ENCODE measurements at regions of chr12 and their contacts with region 1.

Region 1: GRCh38 chr12:124567661-124568373 is 405 bp upstream of the NCOR2 start:
- DNase-seq: peak; percentile 74
- ATAC-seq: peak; percentile 66
- H3K4me3 Mint-ChIP-seq: peak overlapping the region; percentile 82
- H3K27ac Mint-ChIP-seq: peak overlapping the region; percentile 84
- H3K4me1 Mint-ChIP-seq: peaks cover 44% of the 10 kb centered on the region
- H3K27me3 Mint-ChIP-seq: no peaks in the 10 kb centered on the region
- CTCF ChIP-seq: no peak

Region 2: GRCh38 chr12:123388177-123388947 is 1179.5 kb before region 1 on chr12:
- CTCF ChIA-PET with region 1: no interaction called
- POLR2A ChIA-PET with region 1: no interaction called
- intact Hi-C with region 1: loop called (anchors 10 kb)
- DNase-seq: peak; percentile 79
- ATAC-seq: peak; percentile 59
- H3K4me3 Mint-ChIP-seq: peak overlapping the region; percentile 88
- H3K27ac Mint-ChIP-seq: peak overlapping the region; percentile 87
- H3K4me1 Mint-ChIP-seq: peaks cover 36% of the 10 kb centered on the region
- H3K27me3 Mint-ChIP-seq: no peaks in the 10 kb centered on the region
- CTCF ChIP-seq: no peak

Region 3: DNA sequence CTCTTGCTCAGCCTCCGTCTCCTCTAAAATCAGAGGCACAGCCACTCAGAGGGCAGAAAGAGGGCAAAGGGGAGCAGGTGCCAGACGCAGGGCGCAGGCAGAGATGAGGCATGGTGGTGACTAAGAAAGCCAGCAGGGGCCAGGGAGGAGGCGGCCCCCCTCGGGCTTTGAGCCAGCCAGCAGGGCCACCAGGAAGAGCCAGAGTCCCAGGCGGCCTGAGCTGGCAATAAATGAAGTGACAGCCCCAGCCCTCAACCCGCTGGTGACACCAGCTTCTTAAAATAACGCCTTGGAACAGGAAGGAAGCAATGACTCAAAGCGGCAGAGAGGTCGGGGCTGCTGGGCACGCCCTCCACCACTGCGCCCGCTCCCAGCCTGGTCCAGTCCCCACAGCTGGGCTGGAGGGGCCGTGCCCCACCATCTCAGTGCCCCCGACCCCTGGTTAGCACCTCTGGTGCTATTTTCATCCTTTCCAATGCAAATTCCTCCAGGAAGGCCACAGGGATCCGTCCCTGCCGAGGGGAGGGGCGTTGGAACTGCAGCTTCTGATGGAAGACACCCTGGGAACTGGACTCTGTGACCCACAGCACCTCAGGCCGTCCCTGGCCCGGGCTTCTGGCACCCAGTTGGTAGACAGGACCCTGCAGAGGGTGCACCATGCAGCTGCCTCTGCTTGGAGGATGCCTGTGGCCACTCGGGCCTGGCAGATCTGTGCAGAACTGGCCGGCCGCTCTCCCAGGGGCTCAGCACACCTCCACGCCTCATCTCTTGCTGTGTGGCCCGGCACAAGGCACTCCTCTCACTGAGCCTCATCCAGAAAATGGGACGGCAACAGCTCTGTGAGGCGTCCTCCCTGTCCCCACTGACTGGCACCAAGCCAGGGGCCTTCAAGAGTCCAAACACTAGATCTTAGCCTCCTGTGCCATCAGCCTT is 114.1 kb before region 1 on chr12:
- CTCF ChIA-PET with region 1: interaction called, 3 read pairs
- POLR2A ChIA-PET with region 1: interaction called, 4 read pairs
- intact Hi-C with region 1: loop called (anchors 1 kb)
- DNase-seq: peak; percentile 67
- ATAC-seq: peak; percentile 68
- H3K4me3 Mint-ChIP-seq: peak overlapping the region; percentile 69
- H3K27ac Mint-ChIP-seq: peak overlapping the region; percentile 76
- H3K4me1 Mint-ChIP-seq: peaks cover 75% of the 10 kb centered on the region
- H3K27me3 Mint-ChIP-seq: no peaks in the 10 kb centered on the region
- CTCF ChIP-seq: no peak

Region 4: GRCh38 chr12:124551268-124552144 is 16.3 kb before region 1 on chr12:
- CTCF ChIA-PET with region 1: no interaction called
- POLR2A ChIA-PET with region 1: interaction called, 8 read pairs
- intact Hi-C with region 1: loop called (anchors 1 kb)
- DNase-seq: peak; percentile 27
- ATAC-seq: peak; percentile 69
- H3K4me3 Mint-ChIP-seq: peak overlapping the region; percentile 80
- H3K27ac Mint-ChIP-seq: peak overlapping the region; percentile 89
- H3K4me1 Mint-ChIP-seq: peaks cover 81% of the 10 kb centered on the region
- H3K27me3 Mint-ChIP-seq: no peaks in the 10 kb centered on the region
- CTCF ChIP-seq: no peak

Region 5: DNA sequence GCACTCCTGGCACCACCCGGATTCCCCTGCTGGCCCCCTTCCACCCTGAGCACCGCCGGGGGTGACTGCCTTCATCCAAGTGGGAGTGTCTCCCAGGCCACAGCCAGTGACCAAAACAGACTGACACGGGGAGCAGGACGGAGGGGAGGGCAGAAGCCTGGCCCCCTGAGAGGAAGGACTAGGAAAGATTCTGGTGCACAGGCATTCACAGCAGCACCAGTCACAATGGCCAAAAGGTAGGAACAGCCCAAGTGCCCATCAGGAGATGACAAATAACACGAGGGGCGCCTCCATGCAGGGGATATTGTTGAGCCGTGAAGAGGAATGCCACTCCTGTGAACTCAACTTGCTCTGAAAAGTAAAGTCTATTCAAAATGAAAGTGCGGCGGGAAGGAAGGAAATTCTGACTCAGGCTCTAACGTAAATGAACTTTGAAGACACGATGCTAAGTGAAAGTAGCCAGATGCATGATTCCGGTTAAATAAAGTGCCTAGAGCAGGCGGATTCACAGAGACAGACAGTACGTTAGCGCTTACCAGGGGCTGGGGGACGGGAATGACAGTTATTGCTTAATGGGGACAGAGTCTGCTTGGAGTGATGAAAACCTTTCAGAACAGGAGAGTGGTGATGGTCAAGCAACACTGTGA is 145.7 kb after region 1 on chr12:
- CTCF ChIA-PET with region 1: no interaction called
- POLR2A ChIA-PET with region 1: no interaction called
- intact Hi-C with region 1: loop called (anchors 1 kb)
- DNase-seq: peak; percentile 46
- ATAC-seq: peak; percentile 90
- H3K4me3 Mint-ChIP-seq: peak overlapping the region; percentile 52
- H3K27ac Mint-ChIP-seq: peak overlapping the region; percentile 77
- H3K4me1 Mint-ChIP-seq: peaks cover 19% of the 10 kb centered on the region
- H3K27me3 Mint-ChIP-seq: no peaks in the 10 kb centered on the region
- CTCF ChIP-seq: no peak

Region 6: DNA sequence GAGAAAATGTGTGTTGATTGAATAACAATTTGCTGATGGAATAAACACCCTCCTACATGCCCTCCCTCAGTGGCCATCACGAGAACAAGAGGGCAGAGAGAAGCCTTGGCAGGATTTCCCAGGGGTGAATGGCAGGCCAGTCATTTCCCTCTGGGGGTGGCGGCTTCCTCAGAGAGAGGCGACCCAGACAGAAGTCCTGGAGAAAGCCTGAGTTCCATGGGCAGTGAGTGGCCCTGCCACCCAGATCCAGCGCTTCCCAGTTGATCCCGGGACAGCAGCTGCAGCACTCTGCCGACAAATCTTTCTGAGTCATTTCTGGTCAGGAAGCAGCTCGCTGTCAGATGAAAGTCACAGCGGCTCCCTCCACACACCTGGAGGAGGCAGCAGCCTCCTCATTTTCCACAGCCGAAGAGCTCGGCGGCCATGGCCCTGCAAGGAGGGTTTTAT is 172.9 kb after region 1 on chr12:
- CTCF ChIA-PET with region 1: no interaction called
- POLR2A ChIA-PET with region 1: no interaction called
- intact Hi-C with region 1: no loop called
- DNase-seq: no peak
- ATAC-seq: no peak
- H3K4me3 Mint-ChIP-seq: no peak overlapping the region
- H3K27ac Mint-ChIP-seq: no peak overlapping the region
- H3K4me1 Mint-ChIP-seq: peaks cover 3% of the 10 kb centered on the region
- H3K27me3 Mint-ChIP-seq: peaks cover 29% of the 10 kb centered on the region
- CTCF ChIP-seq: no peak

Region 7: DNA sequence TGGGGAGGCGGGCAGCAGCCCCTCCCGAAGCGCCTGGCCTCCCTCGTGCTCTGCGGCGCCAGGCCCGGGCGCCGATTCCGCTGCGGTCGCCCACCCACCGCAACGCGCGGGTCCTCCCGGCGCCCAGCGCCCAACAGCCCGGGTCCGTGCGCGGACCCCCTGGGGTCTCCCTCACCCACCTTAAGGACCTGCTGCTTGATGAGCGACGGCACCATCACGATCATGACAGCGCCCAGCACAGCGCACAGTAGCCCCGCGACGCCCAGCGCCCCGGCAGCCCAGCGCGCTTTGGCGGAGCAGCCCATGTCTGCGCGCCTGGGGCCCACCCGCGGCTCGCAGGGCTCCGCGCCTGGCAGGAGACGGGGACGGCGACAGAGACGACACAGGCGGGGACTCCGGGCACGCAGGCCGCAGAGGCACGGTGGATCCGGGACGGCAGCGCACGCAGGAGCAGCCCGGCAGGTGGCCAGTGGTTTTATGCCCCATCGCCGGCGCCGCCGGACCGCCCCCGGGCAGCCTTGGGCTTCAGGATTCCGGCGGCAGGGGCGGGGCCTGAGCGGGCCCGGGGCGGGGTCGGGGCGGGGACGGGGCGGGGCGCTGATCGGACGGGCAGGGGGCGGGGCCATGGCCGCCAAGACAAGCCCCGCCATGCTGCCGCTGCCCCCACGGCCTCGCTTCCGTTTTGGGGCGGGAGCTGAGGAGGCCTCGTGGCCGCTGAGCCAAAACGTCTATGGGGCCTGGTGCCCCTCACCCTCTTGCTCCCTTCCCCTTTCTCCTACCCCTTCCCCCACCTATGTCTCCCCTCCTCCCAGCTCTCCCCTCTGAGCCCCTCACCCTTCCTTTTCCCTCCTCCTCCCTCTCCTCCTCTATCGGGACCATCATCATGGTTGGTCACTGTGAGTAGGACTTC is 295.9 kb after region 1 on chr12 and contains the start of gene SCARB1:
- CTCF ChIA-PET with region 1: no interaction called
- POLR2A ChIA-PET with region 1: interaction called, 3 read pairs
- intact Hi-C with region 1: loop called (anchors 10 kb)
- DNase-seq: peak; percentile 80
- ATAC-seq: peak; percentile 85
- H3K4me3 Mint-ChIP-seq: peak within 1 kb of the TSS; percentile 83
- H3K27ac Mint-ChIP-seq: peak within 1 kb of the TSS; percentile 91
- H3K4me1 Mint-ChIP-seq: peaks cover 40% of the 10 kb centered on the region
- H3K27me3 Mint-ChIP-seq: no peaks in the 10 kb centered on the region
- CTCF ChIP-seq: no peak
- total RNA-seq, gene SCARB1: 39.3 and 40.8 TPM in 2 replicates

Region 8: GRCh38 chr12:125092872-125093680 is 525.3 kb after region 1 on chr12:
- CTCF ChIA-PET with region 1: no interaction called
- POLR2A ChIA-PET with region 1: no interaction called
- intact Hi-C with region 1: no loop called
- DNase-seq: no peak
- ATAC-seq: no peak
- H3K4me3 Mint-ChIP-seq: no peak overlapping the region
- H3K27ac Mint-ChIP-seq: no peak overlapping the region
- H3K4me1 Mint-ChIP-seq: no peaks in the 10 kb centered on the region
- H3K27me3 Mint-ChIP-seq: no peaks in the 10 kb centered on the region
- CTCF ChIP-seq: no peak